ENCODE measurements at regions of chr10 and their contacts with region 1.

Region 1: DNA sequence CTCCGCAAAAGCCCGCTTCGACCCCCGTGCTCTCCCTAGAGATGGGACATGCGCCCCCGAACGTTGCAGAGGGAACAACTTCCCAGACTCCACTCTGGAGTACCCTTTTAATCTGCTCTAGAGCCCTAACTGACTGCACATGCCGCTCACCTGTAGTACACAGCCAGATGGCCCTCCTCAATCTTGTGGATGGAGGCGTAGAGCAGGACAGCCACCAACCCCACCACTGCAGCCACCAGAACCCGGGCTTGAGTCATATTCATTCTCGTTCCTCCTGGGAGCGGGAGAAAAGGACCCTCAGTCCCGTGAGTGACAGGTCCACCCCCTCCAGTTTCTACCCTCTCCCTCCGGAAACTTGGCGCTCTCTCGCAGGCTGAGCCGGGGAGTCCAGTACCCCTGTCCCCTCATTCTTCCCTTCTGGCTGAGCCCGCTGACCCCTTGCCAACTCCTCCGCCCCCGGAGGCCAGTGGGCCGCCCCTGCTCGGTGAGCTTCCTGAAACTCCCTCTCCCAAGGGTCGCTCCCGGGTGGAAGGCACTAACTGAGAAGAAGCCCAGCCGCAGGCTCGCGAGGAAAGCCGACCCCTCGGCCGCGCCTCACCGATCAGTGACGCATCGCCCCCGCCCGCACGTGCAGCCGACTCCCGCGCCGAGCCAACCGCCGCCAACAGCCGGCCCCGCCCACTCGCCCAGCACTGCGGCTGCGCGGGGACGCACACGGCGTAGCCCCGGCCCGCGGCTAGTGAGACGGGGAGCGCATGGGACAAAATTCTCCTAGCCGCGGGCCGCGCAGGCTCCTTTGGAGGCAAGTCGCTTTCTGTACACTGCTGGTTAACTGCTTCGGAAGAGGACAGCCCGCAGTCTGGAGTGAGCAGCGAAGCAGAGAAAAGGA is at the start of gene ERLIN1:
- DNase-seq: peak; percentile 93
- ATAC-seq: peak; percentile 94
- H3K4me3 ChIP-seq: peak within 1 kb of the TSS; percentile 95 to 99 (median 97)
- H3K4me3 Mint-ChIP-seq: peak within 1 kb of the TSS; percentile 99
- H3K27ac ChIP-seq: peak within 1 kb of the TSS; percentile 83
- H3K27ac Mint-ChIP-seq: peak within 1 kb of the TSS; percentile 96
- H3K4me1 ChIP-seq: peaks cover 19 to 21% of the 10 kb centered on the region in 2 donors
- H3K4me1 Mint-ChIP-seq: peaks cover 46% of the 10 kb centered on the region
- H3K27me3 ChIP-seq: no peaks in the 10 kb centered on the region
- H3K27me3 Mint-ChIP-seq: no peaks in the 10 kb centered on the region
- CTCF ChIP-seq: no peak
- total RNA-seq, gene ERLIN1: 9.0 and 9.7 TPM in 2 replicates

Region 2: DNA sequence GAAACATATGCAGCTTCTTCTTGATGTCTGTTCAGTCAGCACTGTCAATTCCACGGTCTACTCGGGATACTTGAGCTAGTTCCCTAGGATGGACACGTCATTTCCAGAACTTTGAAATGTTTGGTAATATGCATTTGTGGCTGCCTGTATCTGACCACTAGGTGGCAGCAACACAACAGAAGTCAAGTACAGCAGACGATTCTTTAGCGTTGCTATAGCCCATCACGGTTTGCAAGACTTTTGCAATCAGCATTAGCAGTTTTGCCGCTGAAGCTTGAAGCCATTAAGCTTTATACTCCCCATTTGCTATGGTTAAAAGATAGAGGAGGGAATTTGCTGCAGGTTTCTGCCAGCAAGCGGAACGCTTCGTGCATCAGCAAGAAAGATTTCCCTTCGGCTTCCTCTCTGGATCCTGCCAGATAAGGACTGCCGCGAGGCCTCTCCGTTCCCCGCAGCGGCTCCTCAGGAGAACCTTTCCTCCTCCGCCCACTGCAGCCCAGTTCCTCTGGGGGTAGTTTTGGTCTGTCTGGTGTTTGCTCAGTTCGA is 339.7 kb before region 1 on chr10:
- CTCF ChIA-PET with region 1: no interaction called
- POLR2A ChIA-PET with region 1: no interaction called
- intact Hi-C with region 1: loop called (anchors 10 kb)
- DNase-seq: peak; percentile 85
- ATAC-seq: peak; percentile 84
- H3K4me3 ChIP-seq: peak overlapping the region in 4 of 5 experiments; percentile 10 to 61 (median 41)
- H3K4me3 Mint-ChIP-seq: peak overlapping the region; percentile 75
- H3K27ac ChIP-seq: no peak overlapping the region
- H3K27ac Mint-ChIP-seq: no peak overlapping the region
- H3K4me1 ChIP-seq: peaks cover 0 to 10% of the 10 kb centered on the region in 2 donors
- H3K4me1 Mint-ChIP-seq: peaks cover 7% of the 10 kb centered on the region
- H3K27me3 ChIP-seq: peaks cover 0 to 7% (median 0%) of the 10 kb centered on the region in 4 experiments
- H3K27me3 Mint-ChIP-seq: no peaks in the 10 kb centered on the region
- CTCF ChIP-seq: peak; percentile 93

Region 3: DNA sequence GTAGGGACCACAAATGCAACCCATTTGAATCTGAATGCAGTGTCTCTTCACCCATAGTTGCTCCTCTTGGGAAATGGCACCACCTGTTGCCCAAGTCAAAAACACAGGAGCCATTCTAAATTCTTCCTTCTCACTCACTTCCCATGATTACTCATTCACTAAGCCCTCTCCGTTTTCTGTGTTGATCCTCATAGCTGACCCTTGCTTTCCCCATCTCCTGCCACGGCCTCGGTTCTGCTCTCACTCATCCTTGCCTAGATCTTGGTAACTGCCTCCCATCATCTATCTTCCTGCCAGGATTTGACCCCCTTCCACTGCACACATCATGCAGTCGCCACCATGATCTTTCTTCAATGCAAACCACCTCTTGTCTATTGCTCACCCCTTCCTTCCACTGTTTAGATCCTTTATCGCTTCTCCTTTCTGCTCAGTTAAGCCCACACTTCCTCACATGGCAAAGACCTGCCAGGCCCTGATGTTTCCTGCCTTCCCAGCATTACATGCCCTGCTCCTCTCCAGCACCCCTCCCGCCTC is 84.9 kb before region 1 on chr10:
- CTCF ChIA-PET with region 1: no interaction called
- POLR2A ChIA-PET with region 1: no interaction called
- intact Hi-C with region 1: no loop called
- DNase-seq: no peak
- ATAC-seq: no peak
- H3K4me3 ChIP-seq: no peak overlapping the region
- H3K4me3 Mint-ChIP-seq: no peak overlapping the region
- H3K27ac ChIP-seq: no peak overlapping the region
- H3K27ac Mint-ChIP-seq: no peak overlapping the region
- H3K4me1 ChIP-seq: no peaks in the 10 kb centered on the region
- H3K4me1 Mint-ChIP-seq: no peaks in the 10 kb centered on the region
- H3K27me3 ChIP-seq: peaks cover 0 to 14% (median 4%) of the 10 kb centered on the region in 4 experiments
- H3K27me3 Mint-ChIP-seq: peaks cover 43% of the 10 kb centered on the region
- CTCF ChIP-seq: no peak

Region 4: GRCh38 chr10:100229819-100230422 is 44.3 kb after region 1 on chr10:
- CTCF ChIA-PET with region 1: no interaction called
- POLR2A ChIA-PET with region 1: interaction called, 5 read pairs
- intact Hi-C with region 1: loop called (anchors 1 kb)
- DNase-seq: peak; percentile 12
- ATAC-seq: no peak
- H3K4me3 ChIP-seq: peak overlapping the region; percentile 81 to 98 (median 88)
- H3K4me3 Mint-ChIP-seq: peak overlapping the region; percentile 96
- H3K27ac ChIP-seq: peak overlapping the region; percentile 71 to 87
- H3K27ac Mint-ChIP-seq: peak overlapping the region; percentile 90
- H3K4me1 ChIP-seq: peaks cover 9 to 26% of the 10 kb centered on the region in 2 donors
- H3K4me1 Mint-ChIP-seq: peaks cover 26% of the 10 kb centered on the region
- H3K27me3 ChIP-seq: no peaks in the 10 kb centered on the region
- H3K27me3 Mint-ChIP-seq: no peaks in the 10 kb centered on the region
- CTCF ChIP-seq: no peak

Region 5: GRCh38 chr10:100286051-100287033 is 100.7 kb after region 1 on chr10 and contains the start of gene BLOC1S2:
- CTCF ChIA-PET with region 1: no interaction called
- POLR2A ChIA-PET with region 1: no interaction called
- intact Hi-C with region 1: loop called (anchors 5 kb)
- DNase-seq: peak; percentile 91
- ATAC-seq: peak; percentile 90
- H3K4me3 ChIP-seq: peak within 1 kb of the TSS; percentile 69 to 100 (median 99)
- H3K4me3 Mint-ChIP-seq: peak within 1 kb of the TSS; percentile 98
- H3K27ac ChIP-seq: peak within 1 kb of the TSS; percentile 92 to 96
- H3K27ac Mint-ChIP-seq: peak within 1 kb of the TSS; percentile 96
- H3K4me1 ChIP-seq: peaks cover 48 to 53% of the 10 kb centered on the region in 2 donors
- H3K4me1 Mint-ChIP-seq: peaks cover 35% of the 10 kb centered on the region
- H3K27me3 ChIP-seq: no peaks in the 10 kb centered on the region
- H3K27me3 Mint-ChIP-seq: peaks cover 1% of the 10 kb centered on the region
- CTCF ChIP-seq: no peak
- total RNA-seq, gene BLOC1S2: 47.2 and 47.5 TPM in 2 replicates

Region 6: GRCh38 chr10:100346765-100347567 is 161.4 kb after region 1 on chr10 and contains the start of gene SCD:
- CTCF ChIA-PET with region 1: no interaction called
- POLR2A ChIA-PET with region 1: no interaction called
- intact Hi-C with region 1: loop called (anchors 5 kb)
- DNase-seq: peak; percentile 92
- ATAC-seq: peak; percentile 95
- H3K4me3 ChIP-seq: peak within 1 kb of the TSS; percentile 62 to 74 (median 72)
- H3K4me3 Mint-ChIP-seq: peak within 1 kb of the TSS; percentile 91
- H3K27ac ChIP-seq: peak within 1 kb of the TSS; percentile 64 to 85
- H3K27ac Mint-ChIP-seq: peak within 1 kb of the TSS; percentile 78
- H3K4me1 ChIP-seq: peaks cover 14 to 23% of the 10 kb centered on the region in 2 donors
- H3K4me1 Mint-ChIP-seq: peaks cover 22% of the 10 kb centered on the region
- H3K27me3 ChIP-seq: peaks cover 0 to 8% (median 0%) of the 10 kb centered on the region in 4 experiments
- H3K27me3 Mint-ChIP-seq: no peaks in the 10 kb centered on the region
- CTCF ChIP-seq: no peak
- total RNA-seq, gene SCD: 5.1 and 5.6 TPM in 2 replicates

Measured in B cell (primary cell).